CD4-positive, alpha-beta memory T cell (primary cell): ENCODE measurements at regions of chr5 and their contacts with region 1.

Region 1: DNA sequence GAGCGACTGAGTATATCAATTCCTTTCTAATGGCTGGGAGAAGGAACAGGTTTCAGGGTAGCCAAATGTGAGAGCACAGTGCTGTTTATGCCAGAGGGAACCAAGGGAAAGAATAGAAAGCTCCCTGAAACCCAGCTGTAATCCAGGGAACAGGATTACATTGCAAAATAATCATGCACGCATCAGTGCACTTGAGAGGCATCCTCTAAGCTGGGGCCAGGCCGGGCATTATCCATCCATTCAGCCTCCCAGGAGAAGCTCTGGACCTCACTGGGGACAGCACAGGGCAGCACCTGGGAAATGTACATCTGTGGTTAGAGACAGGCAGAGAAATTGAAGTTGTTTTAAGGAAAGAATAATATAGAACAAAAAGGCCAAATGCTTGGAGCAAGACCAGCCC is 72.7 kb downstream of the MTRR start:
- DNase-seq: no peak
- H3K4me3 ChIP-seq: no peak overlapping the region
- H3K4me3 Mint-ChIP-seq: no peak overlapping the region
- H3K27ac ChIP-seq: no peak overlapping the region
- H3K27ac Mint-ChIP-seq: no peak overlapping the region
- H3K4me1 ChIP-seq: no peaks in the 10 kb centered on the region
- H3K4me1 Mint-ChIP-seq: no peaks in the 10 kb centered on the region
- H3K27me3 ChIP-seq: peaks cover 6% of the 10 kb centered on the region
- H3K27me3 Mint-ChIP-seq: peaks cover 10 to 19% of the 10 kb centered on the region in 2 donors

Region 2: GRCh38 chr5:7927466-7928375 is 14.0 kb before region 1 on chr5:
- CTCF ChIA-PET with region 1: interaction called, 28 read pairs
- POLR2A ChIA-PET with region 1: no interaction called
- intact Hi-C with region 1: no loop called
- DNase-seq: peak in 4 of 5 donors; percentile 13 to 25 (median 18)
- H3K4me3 ChIP-seq: no peak overlapping the region
- H3K4me3 Mint-ChIP-seq: no peak overlapping the region
- H3K27ac ChIP-seq: no peak overlapping the region
- H3K27ac Mint-ChIP-seq: no peak overlapping the region
- H3K4me1 ChIP-seq: no peaks in the 10 kb centered on the region
- H3K4me1 Mint-ChIP-seq: peaks cover 0 to 5% (median 2%) of the 10 kb centered on the region in 4 donors
- H3K27me3 ChIP-seq: no peaks in the 10 kb centered on the region
- H3K27me3 Mint-ChIP-seq: peaks cover 5 to 15% of the 10 kb centered on the region in 2 donors

Region 3: DNA sequence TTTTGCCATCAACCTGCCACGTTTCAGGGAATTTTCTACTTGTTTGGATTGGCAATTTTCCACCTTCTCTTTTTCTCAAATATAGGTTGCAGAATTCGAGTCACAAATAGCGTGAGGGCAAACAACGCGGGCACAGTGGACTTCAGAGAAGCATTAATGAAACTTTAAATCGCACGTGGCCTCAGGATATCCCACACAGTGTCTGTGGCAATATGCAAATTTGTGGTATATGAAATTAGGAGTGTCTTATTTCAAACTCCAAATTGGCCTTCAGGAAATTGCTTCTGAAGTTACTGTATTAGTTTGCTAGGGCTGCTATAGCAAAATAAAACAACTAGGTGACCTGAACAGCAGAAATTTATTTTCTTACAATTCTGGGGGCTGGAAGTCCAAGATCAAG is 18.4 kb after region 1 on chr5:
- CTCF ChIA-PET with region 1: no interaction called
- POLR2A ChIA-PET with region 1: no interaction called
- intact Hi-C with region 1: no loop called
- DNase-seq: no peak
- H3K4me3 ChIP-seq: no peak overlapping the region
- H3K4me3 Mint-ChIP-seq: no peak overlapping the region
- H3K27ac ChIP-seq: no peak overlapping the region
- H3K27ac Mint-ChIP-seq: no peak overlapping the region
- H3K4me1 ChIP-seq: no peaks in the 10 kb centered on the region
- H3K4me1 Mint-ChIP-seq: peaks cover 0 to 2% (median 0%) of the 10 kb centered on the region in 4 donors
- H3K27me3 ChIP-seq: no peaks in the 10 kb centered on the region
- H3K27me3 Mint-ChIP-seq: peaks cover 4 to 6% of the 10 kb centered on the region in 2 donors

Region 4: GRCh38 chr5:8057769-8058168 is 116.1 kb after region 1 on chr5:
- CTCF ChIA-PET with region 1: no interaction called
- POLR2A ChIA-PET with region 1: no interaction called
- intact Hi-C with region 1: no loop called
- DNase-seq: no peak
- H3K4me3 ChIP-seq: no peak overlapping the region
- H3K4me3 Mint-ChIP-seq: no peak overlapping the region
- H3K27ac ChIP-seq: no peak overlapping the region
- H3K27ac Mint-ChIP-seq: peak overlapping the region in 1 of 7 donors; percentile 25
- H3K4me1 ChIP-seq: no peaks in the 10 kb centered on the region
- H3K4me1 Mint-ChIP-seq: no peaks in the 10 kb centered on the region
- H3K27me3 ChIP-seq: no peaks in the 10 kb centered on the region
- H3K27me3 Mint-ChIP-seq: peaks cover 0 to 6% of the 10 kb centered on the region in 2 donors